ENCODE measurements at regions of chr4 and their contacts with region 1.

Region 1: GRCh38 chr4:148441986-148442831 is at the start of gene NR3C2:
- DNase-seq: peak; percentile 95
- ATAC-seq: peak; percentile 92
- H3K4me3 ChIP-seq: peak within 1 kb of the TSS; percentile 76 to 87
- H3K27ac ChIP-seq: peak within 1 kb of the TSS; percentile 43; the same call in 1 of the 2 replicates
- H3K4me1 ChIP-seq: peaks cover 4 to 27% of the 10 kb centered on the region in 2 experiments; a peak in 3 of 4 replicates
- H3K27me3 ChIP-seq: no peaks in the 10 kb centered on the region; the same call in 1 of the 2 replicates
- CTCF ChIP-seq: no peak
- POLR2A ChIP-seq: peak; percentile 95
- RAD21 ChIP-seq: no peak
- total RNA-seq, gene NR3C2: 2.7 TPM

Region 2: GRCh38 chr4:147984065-147984777 is 458.0 kb before region 1 on chr4:
- CTCF ChIA-PET with region 1: no interaction called
- POLR2A ChIA-PET with region 1: no interaction called
- RAD21 ChIA-PET with region 1: no interaction called
- intact Hi-C with region 1: loop called (anchors 10 kb)
- DNase-seq: peak; percentile 13
- ATAC-seq: peak; percentile 94
- H3K4me3 ChIP-seq: no peak overlapping the region
- H3K27ac ChIP-seq: no peak overlapping the region
- H3K4me1 ChIP-seq: no peaks in the 10 kb centered on the region
- H3K27me3 ChIP-seq: no peaks in the 10 kb centered on the region
- CTCF ChIP-seq: peak; percentile 60 to 79 (median 76); a peak in 5 of 6 replicates
- POLR2A ChIP-seq: no peak
- RAD21 ChIP-seq: peak; percentile 73

Region 3: DNA sequence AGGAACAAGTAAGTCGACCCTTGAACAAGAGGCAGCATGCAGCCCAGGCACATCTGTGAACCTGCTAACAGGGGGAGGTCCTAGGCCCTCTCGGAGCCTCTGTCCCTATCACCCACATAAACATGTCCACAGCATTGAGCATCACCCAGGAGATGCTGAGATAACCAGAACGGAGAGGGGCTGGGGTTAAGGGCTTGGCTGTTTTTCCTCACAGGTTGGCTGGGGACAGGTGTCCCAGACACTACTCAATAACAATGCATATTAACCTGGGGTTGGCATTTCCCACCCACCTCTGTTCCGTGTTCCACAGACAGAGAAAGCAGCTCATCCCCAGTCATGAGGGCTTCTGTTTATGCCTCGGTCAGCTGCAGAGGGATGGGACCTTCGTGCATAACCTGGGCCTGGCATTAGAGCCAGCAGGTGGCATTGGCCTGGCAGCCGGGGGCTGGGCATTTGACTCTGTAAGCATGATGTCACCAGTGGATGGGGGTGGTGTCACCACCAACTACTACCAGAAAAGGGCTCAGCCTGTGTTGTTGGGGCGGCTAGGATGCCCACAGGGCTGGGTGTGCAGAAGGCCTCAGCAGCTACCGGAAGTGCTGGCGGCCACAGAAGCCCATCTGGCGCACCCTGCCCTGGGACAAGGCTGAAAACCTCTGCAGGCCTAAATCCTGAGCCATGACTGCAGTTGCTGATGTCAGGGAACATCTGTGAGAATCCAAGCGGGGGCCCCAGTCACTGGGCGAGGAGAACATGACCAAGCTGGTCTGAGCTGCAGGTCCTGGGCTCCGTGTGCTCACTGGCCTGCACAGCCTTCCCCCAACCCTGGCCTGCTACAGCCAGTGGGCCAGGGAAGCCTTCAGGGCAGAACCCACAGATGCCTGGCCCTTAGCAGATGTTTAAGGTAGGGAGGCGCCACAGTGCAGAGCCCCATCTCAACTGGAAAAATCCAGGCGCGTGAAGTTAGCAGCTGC is 351.4 kb before region 1 on chr4:
- CTCF ChIA-PET with region 1: no interaction called
- POLR2A ChIA-PET with region 1: no interaction called
- RAD21 ChIA-PET with region 1: no interaction called
- intact Hi-C with region 1: no loop called
- DNase-seq: no peak
- ATAC-seq: no peak; the same call in 1 of the 2 replicates
- H3K4me3 ChIP-seq: no peak overlapping the region
- H3K27ac ChIP-seq: no peak overlapping the region
- H3K4me1 ChIP-seq: peaks cover 3 to 9% of the 10 kb centered on the region in 2 experiments; a peak in 2 of 4 replicates
- H3K27me3 ChIP-seq: no peaks in the 10 kb centered on the region
- CTCF ChIP-seq: no peak
- POLR2A ChIP-seq: no peak
- RAD21 ChIP-seq: no peak

Measured in HCT116 (cell line).